K562 (cell line): ENCODE measurements at regions of chr1 and their contacts with region 1.

Region 1: GRCh38 chr1:26169669-26170471 is at the start of gene ZNF593:
- DNase-seq: peak; percentile 97 to 99 (median 99)
- ATAC-seq: peak; percentile 96
- H3K4me3 ChIP-seq: peak within 1 kb of the TSS; percentile 89
- H3K27ac ChIP-seq: peak within 1 kb of the TSS; percentile 85
- H3K4me1 ChIP-seq: peaks cover 22 to 37% of the 10 kb centered on the region in 2 experiments
- H3K27me3 ChIP-seq: no peaks in the 10 kb centered on the region
- CTCF ChIP-seq: peak; percentile 96 to 99 (median 98)
- EP300 ChIP-seq: peak; percentile 35; the same call in 1 of the 2 replicates
- POLR2A ChIP-seq: peak; percentile 93
- RAD21 ChIP-seq: peak; percentile 62 to 72
- polyA plus RNA-seq, gene ZNF593: 9.8 to 27.1 TPM

Region 2: DNA sequence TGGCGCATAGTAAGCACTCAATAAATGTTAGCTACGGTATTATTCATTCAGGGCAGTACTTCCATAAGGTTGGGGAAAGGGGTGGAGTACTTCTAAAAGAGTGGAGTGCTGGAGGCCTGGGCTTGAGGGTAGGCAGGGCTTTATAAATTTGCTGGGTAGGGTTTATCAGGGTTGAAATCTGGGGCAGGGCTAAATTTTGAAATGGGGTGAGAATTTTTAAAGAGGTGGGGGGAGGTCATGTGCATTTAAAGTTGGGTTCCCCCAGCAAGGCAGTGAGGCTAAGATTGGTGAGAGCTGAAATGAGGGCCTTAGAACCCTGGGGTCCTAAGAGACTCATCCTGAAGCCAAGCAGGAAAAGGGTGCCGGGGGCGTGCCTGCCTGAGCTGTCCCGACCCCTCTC is 30.5 kb after region 1 on chr1:
- CTCF ChIA-PET with region 1: interaction called, 8 read pairs
- POLR2A ChIA-PET with region 1: no interaction called
- in situ Hi-C with region 1: no loop called
- intact Hi-C with region 1: loop called (anchors 2 kb)
- DNase-seq: peak; percentile 28 to 42 (median 36)
- ATAC-seq: no peak
- H3K4me3 ChIP-seq: peak overlapping the region; percentile 14; the same call in 1 of the 2 replicates
- H3K27ac ChIP-seq: peak overlapping the region; percentile 82
- H3K4me1 ChIP-seq: peaks cover 23 to 30% of the 10 kb centered on the region in 2 experiments
- H3K27me3 ChIP-seq: no peaks in the 10 kb centered on the region
- CTCF ChIP-seq: no peak
- EP300 ChIP-seq: no peak
- POLR2A ChIP-seq: no peak
- RAD21 ChIP-seq: no peak